Heart left ventricle (tissue), 16 donors: ENCODE measurements at regions of chr4 and their contacts with region 1.

Region 1: DNA sequence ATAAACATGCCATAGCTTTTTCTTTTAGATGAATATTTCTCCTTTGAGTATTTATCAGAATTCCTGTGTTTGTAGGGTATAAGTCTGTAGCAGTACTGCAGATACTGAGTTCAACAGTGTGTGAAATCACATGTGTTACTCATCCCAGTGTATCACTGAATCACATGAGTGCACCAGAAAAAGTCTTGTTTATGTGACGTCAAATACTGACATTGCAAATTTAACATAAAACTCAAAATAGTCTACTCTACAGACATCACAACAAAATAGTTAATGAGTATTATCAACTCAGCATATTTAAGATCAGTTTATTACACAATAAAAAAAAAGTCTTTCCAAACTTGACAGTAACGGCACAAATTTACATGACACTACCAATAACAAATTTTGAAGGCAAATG is 221.3 kb downstream of the DCTD start:
- DNase-seq: no peak
- ATAC-seq: no peak
- H3K4me3 ChIP-seq: no peak overlapping the region
- H3K27ac ChIP-seq: no peak overlapping the region
- H3K4me1 ChIP-seq: peaks cover 0 to 11% (median 0%) of the 10 kb centered on the region in 12 donors
- H3K27me3 ChIP-seq: no peaks in the 10 kb centered on the region
- CTCF ChIP-seq: no peak
- POLR2A ChIP-seq: no peak

Region 2: DNA sequence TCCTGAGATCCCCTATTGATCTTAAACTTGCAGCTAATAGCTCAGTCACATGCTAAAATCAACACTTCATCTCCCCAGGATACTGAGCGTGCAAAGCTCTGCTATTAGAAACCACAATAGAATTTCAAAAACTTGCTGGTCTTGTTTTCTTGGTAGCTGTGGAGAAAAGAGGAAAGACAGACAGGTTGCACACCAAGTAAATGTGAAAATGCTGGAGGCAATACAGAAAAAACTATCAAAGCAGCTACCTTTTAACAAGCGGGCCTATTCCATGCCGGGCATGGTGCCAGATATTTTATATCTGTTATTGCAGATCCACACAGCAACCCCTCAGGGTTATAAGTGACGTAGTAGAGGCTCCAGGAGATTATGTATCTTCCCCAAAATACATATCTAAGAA is 49.4 kb after region 1 on chr4:
- intact Hi-C with region 1: loop called in 1 of 10 experiments (anchors 10 kb)
- DNase-seq: no peak
- ATAC-seq: no peak
- H3K4me3 ChIP-seq: no peak overlapping the region
- H3K27ac ChIP-seq: no peak overlapping the region
- H3K4me1 ChIP-seq: peaks cover 0 to 13% (median 1%) of the 10 kb centered on the region in 12 donors
- H3K27me3 ChIP-seq: no peaks in the 10 kb centered on the region
- CTCF ChIP-seq: no peak
- POLR2A ChIP-seq: no peak